Psoas muscle (tissue), 8 donors: ENCODE measurements at regions of chr11 and their contacts with region 1.

Region 1: GRCh38 chr11:62860835-62861563 is 19.7 kb upstream of the SLC3A2 start:
- DNase-seq: no peak
- ATAC-seq: no peak
- H3K4me3 ChIP-seq: no peak overlapping the region
- H3K27ac ChIP-seq: no peak overlapping the region
- H3K4me1 ChIP-seq: peaks cover 8% of the 10 kb centered on the region
- H3K27me3 ChIP-seq: no peaks in the 10 kb centered on the region
- CTCF ChIP-seq: no peak

Region 2: GRCh38 chr11:62383822-62384221 is 477.2 kb before region 1 on chr11:
- intact Hi-C with region 1: loop called in 1 of 2 experiments (anchors 10 kb)
- DNase-seq: no peak
- ATAC-seq: no peak
- H3K4me3 ChIP-seq: no peak overlapping the region
- H3K27ac ChIP-seq: no peak overlapping the region
- H3K4me1 ChIP-seq: no peaks in the 10 kb centered on the region
- H3K27me3 ChIP-seq: no peaks in the 10 kb centered on the region
- CTCF ChIP-seq: no peak

Region 3: DNA sequence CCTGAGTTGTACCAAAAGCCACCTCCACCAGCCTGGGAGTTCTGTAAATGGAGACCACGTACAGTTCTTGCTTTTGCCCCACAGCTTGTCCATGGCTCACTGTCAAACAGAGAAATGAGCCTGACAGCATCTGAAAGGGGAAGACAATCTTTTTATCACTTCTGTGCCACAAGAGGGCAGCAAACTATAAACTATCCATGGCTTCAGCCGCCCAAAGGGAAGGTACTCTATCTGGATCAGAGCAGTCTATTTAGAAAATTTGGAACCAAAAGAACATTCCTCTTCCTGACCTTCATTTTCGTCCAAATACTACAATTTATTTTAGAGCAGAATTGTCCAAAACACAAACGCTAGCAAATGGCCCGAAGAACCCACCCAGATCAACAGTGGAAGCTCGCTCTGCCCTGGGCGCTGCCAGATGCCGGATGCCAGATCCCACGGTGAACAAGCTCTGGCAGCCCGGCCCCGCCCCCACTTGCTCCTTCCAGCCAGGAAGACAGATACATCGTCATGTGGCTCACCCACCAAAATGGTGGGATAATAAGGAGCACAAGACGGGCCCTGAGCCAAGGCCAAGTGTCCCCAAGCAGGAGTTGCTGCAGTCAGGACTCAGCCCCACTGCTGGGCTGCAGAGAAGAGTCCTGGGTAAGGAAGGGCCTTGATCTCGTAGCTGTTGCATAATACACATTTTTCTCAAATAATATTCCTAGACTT is 466.0 kb before region 1 on chr11:
- intact Hi-C with region 1: loop called in 1 of 2 experiments (anchors 10 kb)
- DNase-seq: peak; percentile 76 to 84
- ATAC-seq: peak; percentile 85 to 94 (median 86)
- H3K4me3 ChIP-seq: peak overlapping the region; percentile 50
- H3K27ac ChIP-seq: peak overlapping the region; percentile 7
- H3K4me1 ChIP-seq: peaks cover 22% of the 10 kb centered on the region
- H3K27me3 ChIP-seq: no peaks in the 10 kb centered on the region
- CTCF ChIP-seq: peak; percentile 70

Region 4: GRCh38 chr11:62787005-62787759 is 73.8 kb before region 1 on chr11 and contains the start of gene TMEM179B:
- intact Hi-C with region 1: loop called (anchors 2 to 5 kb)
- DNase-seq: peak; percentile 97 to 98
- ATAC-seq: peak; percentile 89 to 91 (median 90)
- H3K4me3 ChIP-seq: peak within 1 kb of the TSS; percentile 97
- H3K27ac ChIP-seq: peak within 1 kb of the TSS; percentile 99
- H3K4me1 ChIP-seq: peaks cover 34% of the 10 kb centered on the region
- H3K27me3 ChIP-seq: no peaks in the 10 kb centered on the region
- CTCF ChIP-seq: peak; percentile 39
- total RNA-seq, gene TMEM179B: 12.2 to 18.5 (median 16.0) TPM

Region 5: GRCh38 chr11:62974848-62975522 is 114.0 kb after region 1 on chr11:
- intact Hi-C with region 1: no loop called
- DNase-seq: peak in 1 of 2 donors; percentile 68
- ATAC-seq: peak in 3 of 4 donors; percentile 30 to 78 (median 63)
- H3K4me3 ChIP-seq: no peak overlapping the region
- H3K27ac ChIP-seq: no peak overlapping the region
- H3K4me1 ChIP-seq: peaks cover 3% of the 10 kb centered on the region
- H3K27me3 ChIP-seq: no peaks in the 10 kb centered on the region
- CTCF ChIP-seq: peak; percentile 44